Posterior vena cava (tissue), 2 donors: ENCODE measurements at regions of chr17 and their contacts with region 1.

Region 1: GRCh38 chr17:63699638-63700527 is at the start of gene LIMD2:
- DNase-seq: peak; percentile 87
- total RNA-seq, gene LIMD2: 9.6 to 13.0 TPM

Region 2: DNA sequence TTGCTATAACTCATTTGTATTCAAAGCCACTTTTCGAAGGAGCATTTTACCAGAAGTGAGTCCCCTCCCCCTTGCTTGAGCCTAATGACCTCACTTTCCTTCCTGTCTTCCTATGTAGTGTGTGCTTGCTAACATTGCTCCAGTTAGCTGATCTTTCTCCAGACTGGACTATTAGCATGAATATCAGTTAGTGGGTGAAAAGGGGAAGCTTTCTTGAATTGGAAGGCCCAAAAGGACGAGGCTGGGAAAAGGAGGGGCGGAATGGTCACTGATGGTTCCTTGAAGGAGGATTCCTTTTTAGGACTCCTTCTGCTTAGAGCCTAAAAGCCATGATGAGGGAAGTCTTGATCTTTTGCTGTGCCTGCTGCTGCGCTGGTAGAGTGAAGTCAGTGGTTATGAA is 65.7 kb before region 1 on chr17:
- intact Hi-C with region 1: no loop called
- DNase-seq: no peak

Region 3: GRCh38 chr17:63722403-63722802 is 22.5 kb after region 1 on chr17:
- intact Hi-C with region 1: no loop called
- DNase-seq: no peak

Region 4: DNA sequence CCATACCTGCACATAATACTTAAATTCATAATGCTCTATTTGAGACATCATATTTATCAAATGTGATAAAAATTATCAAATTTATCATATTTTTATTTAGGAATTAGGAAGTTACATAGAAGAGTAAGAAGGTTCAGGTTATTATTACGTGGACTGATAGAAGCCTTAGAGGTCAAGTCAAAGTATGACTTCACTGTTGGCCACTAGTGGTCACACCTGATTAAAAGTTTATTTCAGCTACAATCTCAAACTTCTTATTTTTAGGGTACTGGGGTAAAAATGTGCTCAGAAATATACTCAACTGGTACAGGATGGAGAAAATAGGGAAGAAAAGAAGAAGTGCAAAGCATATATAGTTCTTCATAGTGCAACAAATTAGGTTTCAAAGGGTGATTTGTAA is 47.5 kb after region 1 on chr17:
- intact Hi-C with region 1: no loop called
- DNase-seq: no peak

Region 5: DNA sequence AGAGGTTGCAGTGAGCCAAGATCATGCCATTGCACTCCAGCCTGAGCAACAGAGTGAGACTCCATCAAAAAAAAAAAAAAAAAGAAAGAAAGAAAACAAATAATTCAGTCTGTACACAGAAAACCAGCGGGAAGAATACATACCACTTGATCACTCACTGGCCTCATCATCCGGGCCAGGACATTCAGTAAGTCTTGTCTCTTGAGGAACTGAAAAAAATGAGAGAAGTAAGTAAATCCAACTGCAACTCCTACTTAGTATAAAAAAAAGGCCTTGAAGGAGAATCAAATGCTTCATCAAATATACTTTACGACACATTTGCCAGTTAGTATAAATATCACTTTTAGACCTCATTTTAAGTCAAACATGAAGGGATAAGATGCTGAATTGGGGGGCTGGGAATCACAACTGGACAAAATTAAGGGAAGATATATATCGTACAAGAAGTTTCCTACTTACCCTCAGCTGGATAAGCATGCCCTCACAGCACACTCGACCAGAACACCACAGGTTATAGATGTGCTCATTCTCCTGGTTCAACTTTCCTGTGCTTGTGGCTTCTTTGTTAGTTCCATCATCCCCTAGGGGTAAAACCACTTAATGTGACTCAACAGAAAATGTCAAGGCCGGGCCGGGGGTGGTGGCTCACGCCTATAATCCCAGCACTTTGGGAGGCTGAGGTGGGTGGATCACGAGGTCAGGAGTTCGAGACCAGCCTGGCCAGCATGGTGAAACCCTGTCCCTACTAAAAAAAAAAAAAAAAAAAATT is 61.1 kb after region 1 on chr17:
- intact Hi-C with region 1: loop called in 1 of 2 experiments (anchors 10 kb)
- DNase-seq: no peak